CD4-positive, alpha-beta memory T cell (primary cell): ENCODE measurements at regions of chr3 and their contacts with region 1.

Region 1: GRCh38 chr3:177050501-177051237 is 146.6 kb downstream of the TBL1XR1 start:
- DNase-seq: peak in 4 of 5 donors; percentile 53 to 64 (median 55)
- H3K4me3 ChIP-seq: no peak overlapping the region
- H3K4me3 Mint-ChIP-seq: no peak overlapping the region
- H3K27ac ChIP-seq: no peak overlapping the region
- H3K27ac Mint-ChIP-seq: peak overlapping the region in 6 of 7 donors; percentile 16 to 76 (median 38)
- H3K4me1 ChIP-seq: peaks cover 8% of the 10 kb centered on the region
- H3K4me1 Mint-ChIP-seq: peaks cover 15 to 19% (median 16%) of the 10 kb centered on the region in 4 donors
- H3K27me3 ChIP-seq: no peaks in the 10 kb centered on the region
- H3K27me3 Mint-ChIP-seq: no peaks in the 10 kb centered on the region

Region 2: DNA sequence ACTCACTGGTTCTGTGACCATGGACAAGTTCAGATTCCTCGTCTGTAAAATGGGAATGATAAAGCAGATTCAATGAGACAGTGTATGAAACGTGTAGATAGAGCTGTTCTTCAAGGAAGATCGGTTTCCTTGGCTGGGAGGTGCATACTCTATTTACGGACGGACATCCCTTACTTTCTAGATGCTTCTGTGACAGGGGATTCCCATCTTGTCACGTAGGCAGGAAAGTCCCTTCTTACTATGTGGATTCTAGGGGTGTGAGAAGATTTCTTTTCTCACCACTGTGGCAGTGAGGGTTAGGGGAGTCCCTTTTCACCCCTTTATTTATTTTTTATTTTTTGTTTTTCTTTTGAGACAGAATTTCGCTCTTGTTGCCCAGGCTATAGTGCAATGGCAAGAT is 327.5 kb after region 1 on chr3:
- CTCF ChIA-PET with region 1: interaction called, 3 read pairs
- POLR2A ChIA-PET with region 1: interaction called, 3 read pairs
- intact Hi-C with region 1: loop called (anchors 5 kb)
- DNase-seq: peak; percentile 9 to 45 (median 25)
- H3K4me3 ChIP-seq: no peak overlapping the region
- H3K4me3 Mint-ChIP-seq: peak overlapping the region in 1 of 8 donors; percentile 8
- H3K27ac ChIP-seq: no peak overlapping the region
- H3K27ac Mint-ChIP-seq: peak overlapping the region in 5 of 7 donors; percentile 13 to 78 (median 67)
- H3K4me1 ChIP-seq: no peaks in the 10 kb centered on the region
- H3K4me1 Mint-ChIP-seq: peaks cover 6 to 14% (median 9%) of the 10 kb centered on the region in 4 donors
- H3K27me3 ChIP-seq: no peaks in the 10 kb centered on the region
- H3K27me3 Mint-ChIP-seq: no peaks in the 10 kb centered on the region

Region 3: GRCh38 chr3:177597311-177598096 is 546.8 kb after region 1 on chr3:
- CTCF ChIA-PET with region 1: interaction called, 5 read pairs
- POLR2A ChIA-PET with region 1: no interaction called
- intact Hi-C with region 1: loop called (anchors 5 kb)
- DNase-seq: peak; percentile 55 to 67 (median 57)
- H3K4me3 ChIP-seq: peak overlapping the region; percentile 18 to 49
- H3K4me3 Mint-ChIP-seq: peak overlapping the region; percentile 10 to 87 (median 77)
- H3K27ac ChIP-seq: peak overlapping the region; percentile 60
- H3K27ac Mint-ChIP-seq: peak overlapping the region; percentile 92 to 97 (median 95)
- H3K4me1 ChIP-seq: peaks cover 83% of the 10 kb centered on the region
- H3K4me1 Mint-ChIP-seq: peaks cover 67 to 90% (median 75%) of the 10 kb centered on the region in 4 donors
- H3K27me3 ChIP-seq: no peaks in the 10 kb centered on the region
- H3K27me3 Mint-ChIP-seq: no peaks in the 10 kb centered on the region

Region 4: DNA sequence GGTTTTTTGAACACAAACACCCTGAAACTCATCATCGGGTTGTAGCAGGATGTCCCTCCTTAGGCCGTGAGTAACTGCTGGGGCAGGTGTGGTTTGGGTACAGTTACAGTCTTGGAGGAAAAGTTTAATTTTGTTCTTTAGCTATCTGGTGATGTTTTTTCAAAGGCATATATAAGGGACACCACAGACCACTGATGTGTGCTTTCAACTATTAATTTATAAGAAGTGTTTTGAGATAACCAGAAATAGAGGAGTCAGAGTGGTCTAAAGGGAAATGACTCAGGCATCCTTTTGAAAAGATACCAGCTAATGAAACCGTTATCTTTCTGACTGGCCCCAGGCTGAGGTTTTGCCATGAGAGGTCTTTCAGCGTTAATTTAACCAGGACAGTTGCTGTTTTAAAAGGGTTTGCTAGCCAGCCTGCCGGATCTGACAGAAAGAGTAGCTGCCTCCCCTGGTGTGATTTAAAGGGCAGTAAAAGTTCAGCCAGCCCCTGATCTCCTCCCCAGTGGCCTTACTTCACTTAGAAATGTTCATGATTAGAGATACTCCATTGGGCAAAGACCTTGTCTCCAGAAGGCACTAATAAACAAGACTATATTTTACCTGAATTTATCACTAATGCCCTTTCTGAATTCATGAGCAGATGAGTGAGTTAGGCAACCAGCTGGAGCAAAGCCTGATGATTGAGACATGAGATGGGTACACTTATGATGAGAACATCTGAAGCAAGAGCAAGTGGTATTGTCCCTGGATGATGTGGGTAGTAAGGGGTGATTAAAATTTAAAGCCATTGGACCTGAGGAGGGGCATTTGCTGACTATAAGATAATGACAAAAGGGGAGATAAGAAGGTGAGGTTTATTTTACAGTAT is 629.1 kb after region 1 on chr3:
- CTCF ChIA-PET with region 1: interaction called, 3 read pairs
- POLR2A ChIA-PET with region 1: no interaction called
- intact Hi-C with region 1: loop called (anchors 5 kb)
- DNase-seq: no peak
- H3K4me3 ChIP-seq: no peak overlapping the region
- H3K4me3 Mint-ChIP-seq: peak overlapping the region in 1 of 8 donors; percentile 10
- H3K27ac ChIP-seq: no peak overlapping the region
- H3K27ac Mint-ChIP-seq: peak overlapping the region in 3 of 7 donors; percentile 2 to 57 (median 10)
- H3K4me1 ChIP-seq: peaks cover 6% of the 10 kb centered on the region
- H3K4me1 Mint-ChIP-seq: peaks cover 9 to 20% (median 13%) of the 10 kb centered on the region in 4 donors
- H3K27me3 ChIP-seq: no peaks in the 10 kb centered on the region
- H3K27me3 Mint-ChIP-seq: peaks cover 0 to 1% of the 10 kb centered on the region in 2 donors

Region 5: GRCh38 chr3:178385280-178385952 is 1334.7 kb after region 1 on chr3:
- CTCF ChIA-PET with region 1: interaction called, 11 read pairs
- POLR2A ChIA-PET with region 1: interaction called, 4 read pairs
- intact Hi-C with region 1: loop called (anchors 2 kb)
- DNase-seq: peak in 4 of 5 donors; percentile 19 to 36 (median 20)
- H3K4me3 ChIP-seq: no peak overlapping the region
- H3K4me3 Mint-ChIP-seq: no peak overlapping the region
- H3K27ac ChIP-seq: no peak overlapping the region
- H3K27ac Mint-ChIP-seq: no peak overlapping the region
- H3K4me1 ChIP-seq: no peaks in the 10 kb centered on the region
- H3K4me1 Mint-ChIP-seq: no peaks in the 10 kb centered on the region
- H3K27me3 ChIP-seq: no peaks in the 10 kb centered on the region
- H3K27me3 Mint-ChIP-seq: peaks cover 8 to 9% of the 10 kb centered on the region in 2 donors